B cell (primary cell): ENCODE measurements at regions of chr1 and their contacts with region 1.

Region 1: DNA sequence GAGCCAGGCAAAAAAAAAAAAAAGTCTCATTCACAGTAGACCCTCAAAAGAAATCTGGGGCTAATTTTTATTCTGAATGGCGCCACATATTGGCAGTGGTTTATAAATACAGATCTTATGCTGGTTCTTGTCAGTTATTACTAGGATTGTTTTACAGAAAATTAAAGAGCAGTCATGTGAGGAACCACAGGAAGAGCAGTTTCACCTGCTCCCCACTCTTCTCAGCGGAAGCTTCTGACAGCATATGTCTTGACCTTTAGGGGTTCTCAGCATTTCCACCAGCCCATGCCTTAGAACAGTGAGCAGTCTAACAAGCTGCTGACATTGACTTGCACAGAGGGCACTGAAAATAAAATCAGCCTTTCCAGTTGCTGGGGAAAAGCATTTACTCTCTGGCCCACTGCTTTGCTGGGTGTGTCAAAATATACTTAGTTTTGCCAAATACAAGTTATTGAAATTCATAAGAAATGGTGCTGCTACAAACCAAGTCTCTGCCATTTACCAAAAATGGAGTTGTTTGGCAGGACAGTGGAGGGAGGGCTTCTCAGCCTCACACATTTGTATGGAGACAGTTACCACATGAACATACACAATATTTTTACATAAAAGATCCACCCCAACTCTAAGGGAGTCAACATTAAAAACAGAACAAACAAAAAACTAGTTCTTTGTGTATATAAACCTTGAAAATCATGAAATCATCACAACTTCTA is 144.2 kb downstream of the SYT2 start:
- DNase-seq: peak; percentile 63
- ATAC-seq: peak; percentile 99
- H3K4me3 ChIP-seq: no peak overlapping the region
- H3K4me3 Mint-ChIP-seq: peak overlapping the region; percentile 44
- H3K27ac ChIP-seq: no peak overlapping the region
- H3K27ac Mint-ChIP-seq: no peak overlapping the region
- H3K4me1 ChIP-seq: peaks cover 21 to 31% of the 10 kb centered on the region in 2 donors
- H3K4me1 Mint-ChIP-seq: peaks cover 34% of the 10 kb centered on the region
- H3K27me3 ChIP-seq: no peaks in the 10 kb centered on the region
- H3K27me3 Mint-ChIP-seq: no peaks in the 10 kb centered on the region
- CTCF ChIP-seq: peak; percentile 4

Region 2: DNA sequence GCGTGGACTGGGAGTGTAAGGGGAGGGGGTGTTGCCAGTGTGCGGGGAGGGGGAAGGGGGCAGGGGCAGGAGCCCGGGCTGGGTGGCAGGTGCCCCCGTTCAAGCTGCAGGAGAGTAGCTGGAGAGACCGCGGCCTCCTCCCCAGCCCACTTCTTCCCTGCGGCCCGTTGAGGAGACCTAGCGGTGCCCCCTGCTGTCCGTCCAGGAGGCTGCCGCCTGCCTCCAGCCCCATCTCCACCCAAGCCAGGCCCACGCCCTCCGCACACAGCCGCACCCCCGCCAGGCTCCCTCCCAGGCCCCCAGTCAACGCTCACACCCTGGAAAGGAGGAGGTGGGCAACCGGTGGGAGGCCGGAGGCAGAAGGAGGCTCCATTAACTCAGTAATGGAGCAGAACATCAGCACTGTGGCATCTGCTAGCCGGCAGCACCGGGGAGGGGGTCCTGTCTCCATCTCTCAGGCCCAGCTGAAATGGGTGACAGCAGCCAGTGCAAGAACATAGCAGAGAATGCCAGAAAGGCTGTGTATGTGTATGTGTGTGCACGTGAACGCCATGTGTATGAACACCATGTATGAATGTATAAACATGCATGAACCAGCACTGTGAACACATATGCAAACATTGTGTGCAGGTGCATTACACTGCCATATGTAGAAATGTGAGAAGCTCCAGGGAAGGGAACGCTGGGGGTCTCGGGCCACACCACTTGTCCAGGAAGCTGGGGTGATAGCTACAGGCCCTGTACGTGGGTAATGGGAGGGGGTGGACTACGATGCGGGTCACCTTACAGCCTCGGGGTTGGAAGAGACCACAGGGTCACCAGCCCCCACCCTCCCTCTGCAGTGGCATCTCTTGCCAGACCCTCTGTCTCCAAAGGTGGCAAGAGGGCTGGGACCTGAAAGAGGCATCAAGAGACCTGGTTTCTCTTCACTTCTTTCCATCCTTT is 59.6 kb after region 1 on chr1:
- CTCF ChIA-PET with region 1: interaction called, 6 read pairs
- POLR2A ChIA-PET with region 1: no interaction called
- intact Hi-C with region 1: loop called (anchors 5 kb)
- DNase-seq: peak; percentile 70
- ATAC-seq: peak; percentile 61
- H3K4me3 ChIP-seq: no peak overlapping the region
- H3K4me3 Mint-ChIP-seq: no peak overlapping the region
- H3K27ac ChIP-seq: no peak overlapping the region
- H3K27ac Mint-ChIP-seq: no peak overlapping the region
- H3K4me1 ChIP-seq: peaks cover 60 to 64% of the 10 kb centered on the region in 2 donors
- H3K4me1 Mint-ChIP-seq: peaks cover 42% of the 10 kb centered on the region
- H3K27me3 ChIP-seq: peaks cover 0 to 31% (median 0%) of the 10 kb centered on the region in 4 experiments
- H3K27me3 Mint-ChIP-seq: peaks cover 21% of the 10 kb centered on the region
- CTCF ChIP-seq: peak; percentile 67

Region 3: DNA sequence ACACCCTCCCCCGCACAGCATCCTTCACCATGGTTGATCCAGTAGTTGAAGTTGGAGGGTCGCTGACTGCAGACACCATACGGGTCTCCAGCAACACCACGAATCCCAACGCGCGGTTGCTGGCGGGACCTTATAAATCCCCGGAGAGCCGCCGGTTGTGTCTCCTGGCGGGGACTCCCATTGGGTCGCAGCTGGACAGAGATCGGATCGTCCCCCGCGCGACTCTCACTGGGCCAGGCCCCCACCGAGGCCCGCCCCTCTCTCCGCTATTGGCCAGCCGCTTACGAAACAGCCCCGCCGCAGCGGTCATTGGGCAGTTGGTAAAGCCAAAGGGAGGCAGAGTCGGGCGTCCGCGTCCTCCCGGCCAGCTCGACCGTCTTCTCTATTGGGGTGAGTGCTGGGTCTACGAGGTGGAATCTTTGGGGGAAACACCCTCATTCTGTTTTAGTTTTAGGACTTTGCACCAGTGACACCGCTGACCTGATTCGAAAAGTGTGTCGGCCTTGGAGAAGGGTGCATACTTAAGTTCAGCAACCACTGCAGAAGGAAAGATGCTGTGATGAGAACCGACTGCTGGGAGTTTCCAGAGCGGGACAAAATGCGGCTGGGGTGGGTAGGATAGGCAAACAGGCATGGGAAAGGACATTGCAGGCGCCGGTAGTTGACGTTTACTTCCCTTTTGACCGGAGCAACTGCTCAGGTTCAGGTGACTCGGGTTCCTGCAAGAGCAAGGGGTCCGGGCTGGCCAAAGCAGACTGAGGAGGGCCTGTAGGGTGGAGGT is 295.6 kb after region 1 on chr1:
- CTCF ChIA-PET with region 1: no interaction called
- POLR2A ChIA-PET with region 1: no interaction called
- intact Hi-C with region 1: no loop called
- DNase-seq: peak; percentile 63
- ATAC-seq: peak; percentile 97
- H3K4me3 ChIP-seq: peak overlapping the region; percentile 54 to 66 (median 61)
- H3K4me3 Mint-ChIP-seq: peak overlapping the region; percentile 88
- H3K27ac ChIP-seq: no peak overlapping the region
- H3K27ac Mint-ChIP-seq: no peak overlapping the region
- H3K4me1 ChIP-seq: peaks cover 10 to 16% of the 10 kb centered on the region in 2 donors
- H3K4me1 Mint-ChIP-seq: peaks cover 14% of the 10 kb centered on the region
- H3K27me3 ChIP-seq: peaks cover 0 to 26% (median 10%) of the 10 kb centered on the region in 4 experiments
- H3K27me3 Mint-ChIP-seq: peaks cover 20% of the 10 kb centered on the region
- CTCF ChIP-seq: no peak